Activated CD4-positive, alpha-beta T cell treated with anti-CD3 and anti-CD28 coated beads for 36 hours (primary cell): ENCODE measurements at regions of chr2 and their contacts with region 1.

Region 1: GRCh38 chr2:241355983-241356870 is at the start of gene FARP2:
- DNase-seq: peak; percentile 99
- ATAC-seq: peak; percentile 95
- H3K4me3 Mint-ChIP-seq: peak within 1 kb of the TSS; percentile 73
- H3K27ac Mint-ChIP-seq: peak within 1 kb of the TSS; percentile 80
- H3K4me1 Mint-ChIP-seq: peaks cover 48% of the 10 kb centered on the region
- H3K27me3 Mint-ChIP-seq: no peaks in the 10 kb centered on the region
- total RNA-seq, gene FARP2: 29.0 to 30.7 TPM

Region 2: GRCh38 chr2:240021488-240022104 is 1334.6 kb before region 1 on chr2:
- CTCF ChIA-PET with region 1: no interaction called
- POLR2A ChIA-PET with region 1: no interaction called
- intact Hi-C with region 1: loop called in 1 of 2 experiments (anchors 10 kb)
- DNase-seq: peak; percentile 83
- ATAC-seq: peak; percentile 28
- H3K4me3 Mint-ChIP-seq: no peak overlapping the region
- H3K27ac Mint-ChIP-seq: no peak overlapping the region
- H3K4me1 Mint-ChIP-seq: peaks cover 25% of the 10 kb centered on the region
- H3K27me3 Mint-ChIP-seq: no peaks in the 10 kb centered on the region

Region 3: GRCh38 chr2:240586198-240586918 is 769.9 kb before region 1 on chr2 and contains the start of gene CAPN10:
- CTCF ChIA-PET with region 1: no interaction called
- POLR2A ChIA-PET with region 1: no interaction called
- intact Hi-C with region 1: loop called in 1 of 2 experiments (anchors 1 kb)
- DNase-seq: peak; percentile 98
- ATAC-seq: peak; percentile 91
- H3K4me3 Mint-ChIP-seq: peak within 1 kb of the TSS; percentile 87
- H3K27ac Mint-ChIP-seq: peak within 1 kb of the TSS; percentile 85
- H3K4me1 Mint-ChIP-seq: peaks cover 38% of the 10 kb centered on the region
- H3K27me3 Mint-ChIP-seq: no peaks in the 10 kb centered on the region
- total RNA-seq, gene CAPN10: 22.1 to 30.2 TPM

Region 4: DNA sequence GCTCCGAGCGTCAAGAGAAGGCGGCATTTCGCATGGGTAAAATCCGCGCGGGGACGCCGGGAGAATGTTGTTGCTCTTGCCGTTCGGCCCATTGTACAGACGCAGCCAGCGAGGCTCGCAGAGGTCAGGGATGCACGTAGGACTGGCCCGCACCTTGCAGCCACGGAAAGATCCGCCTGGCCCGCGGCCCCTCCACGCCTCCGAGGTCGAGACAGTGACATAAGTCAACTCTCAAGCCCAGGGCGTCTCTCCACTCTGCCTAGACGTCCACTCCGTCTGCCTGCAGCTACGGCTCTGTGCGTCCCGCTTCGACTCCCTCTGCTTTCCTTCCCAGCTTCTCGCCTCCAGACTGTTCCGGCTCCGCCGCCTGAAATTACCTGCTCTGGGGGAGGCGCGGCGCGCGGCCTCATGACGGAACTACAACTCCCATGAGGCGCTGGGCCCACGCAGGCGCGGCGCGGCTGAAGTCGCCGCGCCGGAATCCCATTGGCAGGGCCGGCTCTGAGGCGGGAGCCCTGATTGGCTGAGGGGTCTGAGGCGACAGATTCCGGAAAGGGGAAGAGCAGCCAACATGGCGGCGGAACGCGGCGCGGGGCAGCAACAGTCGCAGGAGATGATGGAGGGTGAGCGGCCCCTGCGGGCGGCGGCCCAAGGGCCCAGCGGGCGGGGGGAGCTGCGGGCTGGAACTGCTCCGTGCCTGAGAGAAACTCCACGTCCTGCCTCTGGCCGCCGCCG is 206.1 kb before region 1 on chr2 and contains the start of gene PPP1R7:
- CTCF ChIA-PET with region 1: no interaction called
- POLR2A ChIA-PET with region 1: no interaction called
- intact Hi-C with region 1: loop called in 1 of 2 experiments (anchors 1 kb)
- DNase-seq: peak; percentile 98
- ATAC-seq: peak; percentile 79
- H3K4me3 Mint-ChIP-seq: peak within 1 kb of the TSS; percentile 88
- H3K27ac Mint-ChIP-seq: peak within 1 kb of the TSS; percentile 91
- H3K4me1 Mint-ChIP-seq: peaks cover 51% of the 10 kb centered on the region
- H3K27me3 Mint-ChIP-seq: no peaks in the 10 kb centered on the region
- total RNA-seq, gene PPP1R7: 104 to 129 TPM

Region 5: GRCh38 chr2:241217320-241218031 is 138.8 kb before region 1 on chr2:
- CTCF ChIA-PET with region 1: no interaction called
- POLR2A ChIA-PET with region 1: no interaction called
- intact Hi-C with region 1: no loop called
- DNase-seq: peak; percentile 60
- ATAC-seq: peak; percentile 37
- H3K4me3 Mint-ChIP-seq: peak overlapping the region; percentile 56
- H3K27ac Mint-ChIP-seq: no peak overlapping the region
- H3K4me1 Mint-ChIP-seq: peaks cover 9% of the 10 kb centered on the region
- H3K27me3 Mint-ChIP-seq: peaks cover 2% of the 10 kb centered on the region

Region 6: DNA sequence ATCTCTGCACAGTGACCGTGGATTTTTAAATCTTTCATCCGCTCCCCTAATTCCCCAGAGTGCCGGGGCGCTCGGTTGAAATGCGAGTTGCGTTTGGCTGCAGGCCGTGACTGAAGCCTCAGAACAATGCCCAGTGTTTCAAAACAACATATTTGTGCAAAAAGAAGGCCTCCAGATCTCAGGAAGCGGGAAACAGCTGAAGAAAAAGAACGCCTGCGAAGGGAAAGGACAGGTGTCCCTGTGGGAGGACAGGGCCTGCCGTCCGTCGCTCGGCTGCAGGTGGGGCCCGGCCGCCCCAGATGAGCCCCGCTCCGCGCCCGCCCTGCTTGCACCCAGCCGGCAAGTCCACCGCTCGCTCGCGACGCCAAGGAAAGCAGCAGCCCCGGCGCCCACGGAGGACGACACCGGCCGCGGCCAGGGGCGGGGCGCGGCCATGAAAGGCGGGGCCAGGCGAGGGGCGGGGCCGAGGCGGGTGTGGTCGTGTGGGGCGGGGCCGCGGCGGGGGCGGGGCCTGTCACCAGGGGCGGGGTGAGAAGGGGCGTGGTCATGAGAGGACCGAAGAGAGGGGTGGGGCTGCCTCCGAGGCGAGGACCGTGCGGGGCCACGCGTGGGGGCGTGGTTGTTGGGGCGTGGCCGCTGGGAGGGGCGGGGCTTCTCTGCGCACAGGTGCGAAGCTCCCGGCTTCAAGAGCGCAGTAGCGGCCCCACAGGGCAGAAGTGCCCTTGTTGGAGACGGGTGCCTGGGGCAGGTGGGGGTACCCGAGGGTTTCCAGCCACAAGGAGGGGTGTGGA is 184.7 kb after region 1 on chr2:
- CTCF ChIA-PET with region 1: no interaction called
- POLR2A ChIA-PET with region 1: no interaction called
- intact Hi-C with region 1: loop called in 1 of 2 experiments (anchors 1 kb)
- DNase-seq: peak; percentile 90
- ATAC-seq: peak; percentile 92
- H3K4me3 Mint-ChIP-seq: peak overlapping the region; percentile 31
- H3K27ac Mint-ChIP-seq: no peak overlapping the region
- H3K4me1 Mint-ChIP-seq: peaks cover 4% of the 10 kb centered on the region
- H3K27me3 Mint-ChIP-seq: peaks cover 14% of the 10 kb centered on the region

Region 7: GRCh38 chr2:241686649-241687425 is 330.6 kb after region 1 on chr2 and contains the start of gene DTYMK:
- CTCF ChIA-PET with region 1: no interaction called
- POLR2A ChIA-PET with region 1: no interaction called
- intact Hi-C with region 1: loop called in 1 of 2 experiments (anchors 1 kb)
- DNase-seq: peak; percentile 98
- ATAC-seq: peak; percentile 96
- H3K4me3 Mint-ChIP-seq: peak within 1 kb of the TSS; percentile 98
- H3K27ac Mint-ChIP-seq: peak within 1 kb of the TSS; percentile 96
- H3K4me1 Mint-ChIP-seq: peaks cover 32% of the 10 kb centered on the region
- H3K27me3 Mint-ChIP-seq: no peaks in the 10 kb centered on the region
- total RNA-seq, gene DTYMK: 79.8 to 93.1 TPM

Region 8: DNA sequence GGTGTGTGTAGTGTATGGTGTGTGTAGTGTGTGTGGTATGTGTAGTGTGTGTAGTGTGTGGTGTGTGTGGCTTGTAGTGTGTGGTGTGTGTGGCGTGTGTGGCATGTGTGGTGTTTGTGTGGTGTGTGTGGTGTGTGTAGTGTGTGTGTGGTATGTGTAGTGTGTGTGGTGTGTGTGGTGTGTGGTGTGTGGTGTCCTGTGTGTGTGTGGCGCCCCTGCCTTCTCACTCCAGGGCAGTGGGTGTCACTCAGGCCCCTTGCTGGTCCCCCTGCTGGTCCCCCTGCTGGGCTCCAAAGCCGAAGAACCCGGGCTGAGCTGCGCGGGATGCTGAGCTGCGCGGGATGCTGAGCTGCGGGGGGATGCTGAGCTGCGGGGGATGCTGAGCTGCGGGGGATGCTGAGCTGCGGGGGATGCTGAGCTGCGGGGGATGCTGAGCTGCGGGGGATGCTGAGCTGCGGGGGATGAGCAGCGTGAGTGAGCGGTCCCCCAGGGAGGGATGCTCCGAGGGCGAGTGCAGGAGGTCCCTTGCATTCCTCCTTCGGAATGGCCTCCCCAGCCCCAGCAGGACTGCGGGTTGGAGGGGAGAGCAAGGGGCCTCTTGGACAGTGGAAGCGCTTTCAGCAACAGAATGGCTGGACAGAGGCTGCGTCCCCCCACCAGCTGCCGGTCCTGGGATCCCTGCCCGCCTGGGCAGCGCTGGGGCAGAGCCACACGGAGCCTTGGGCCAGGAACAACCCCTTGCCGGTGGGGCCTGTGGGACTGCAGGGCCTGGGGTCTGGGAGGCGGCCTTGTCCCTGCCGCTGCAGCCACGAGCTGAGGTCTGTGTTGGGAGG is 509.9 kb after region 1 on chr2:
- CTCF ChIA-PET with region 1: no interaction called
- POLR2A ChIA-PET with region 1: no interaction called
- intact Hi-C with region 1: loop called in 1 of 2 experiments (anchors 1 kb)
- DNase-seq: peak; percentile 70
- ATAC-seq: no peak
- H3K4me3 Mint-ChIP-seq: no peak overlapping the region
- H3K27ac Mint-ChIP-seq: no peak overlapping the region
- H3K4me1 Mint-ChIP-seq: peaks cover 80% of the 10 kb centered on the region
- H3K27me3 Mint-ChIP-seq: peaks cover 24% of the 10 kb centered on the region